ENCODE measurements at regions of chr17 and their contacts with region 1.

Region 1: GRCh38 chr17:9239793-9240658 is 218.7 kb downstream of the NTN1 start:
- DNase-seq: peak; percentile 59 to 91
- H3K4me3 ChIP-seq: peak overlapping the region; percentile 65 to 69
- H3K27ac ChIP-seq: peak overlapping the region; percentile 99 to 100
- H3K4me1 ChIP-seq: peaks cover 21 to 60% of the 10 kb centered on the region in 2 donors
- H3K27me3 ChIP-seq: no peaks in the 10 kb centered on the region
- CTCF ChIP-seq: no peak

Region 2: GRCh38 chr17:9115446-9116191 is 124.4 kb before region 1 on chr17:
- intact Hi-C with region 1: loop called (anchors 5 kb)
- DNase-seq: peak; percentile 35 to 89
- H3K4me3 ChIP-seq: peak overlapping the region; percentile 46 to 59
- H3K27ac ChIP-seq: peak overlapping the region; percentile 88 to 93
- H3K4me1 ChIP-seq: peaks cover 0 to 11% of the 10 kb centered on the region in 2 donors
- H3K27me3 ChIP-seq: no peaks in the 10 kb centered on the region
- CTCF ChIP-seq: peak in 2 of 3 experiments; percentile 45 to 65

Region 3: GRCh38 chr17:9217151-9218056 is 22.6 kb before region 1 on chr17:
- intact Hi-C with region 1: loop called (anchors 2 kb)
- DNase-seq: no peak
- H3K4me3 ChIP-seq: no peak overlapping the region
- H3K27ac ChIP-seq: peak overlapping the region; percentile 49 to 55
- H3K4me1 ChIP-seq: peaks cover 0 to 8% of the 10 kb centered on the region in 2 donors
- H3K27me3 ChIP-seq: no peaks in the 10 kb centered on the region
- CTCF ChIP-seq: no peak

Measured in ascending aorta (tissue), 2 donors.